Lower leg skin (tissue), 4 donors: ENCODE measurements at regions of chr4 and their contacts with region 1.

Region 1: DNA sequence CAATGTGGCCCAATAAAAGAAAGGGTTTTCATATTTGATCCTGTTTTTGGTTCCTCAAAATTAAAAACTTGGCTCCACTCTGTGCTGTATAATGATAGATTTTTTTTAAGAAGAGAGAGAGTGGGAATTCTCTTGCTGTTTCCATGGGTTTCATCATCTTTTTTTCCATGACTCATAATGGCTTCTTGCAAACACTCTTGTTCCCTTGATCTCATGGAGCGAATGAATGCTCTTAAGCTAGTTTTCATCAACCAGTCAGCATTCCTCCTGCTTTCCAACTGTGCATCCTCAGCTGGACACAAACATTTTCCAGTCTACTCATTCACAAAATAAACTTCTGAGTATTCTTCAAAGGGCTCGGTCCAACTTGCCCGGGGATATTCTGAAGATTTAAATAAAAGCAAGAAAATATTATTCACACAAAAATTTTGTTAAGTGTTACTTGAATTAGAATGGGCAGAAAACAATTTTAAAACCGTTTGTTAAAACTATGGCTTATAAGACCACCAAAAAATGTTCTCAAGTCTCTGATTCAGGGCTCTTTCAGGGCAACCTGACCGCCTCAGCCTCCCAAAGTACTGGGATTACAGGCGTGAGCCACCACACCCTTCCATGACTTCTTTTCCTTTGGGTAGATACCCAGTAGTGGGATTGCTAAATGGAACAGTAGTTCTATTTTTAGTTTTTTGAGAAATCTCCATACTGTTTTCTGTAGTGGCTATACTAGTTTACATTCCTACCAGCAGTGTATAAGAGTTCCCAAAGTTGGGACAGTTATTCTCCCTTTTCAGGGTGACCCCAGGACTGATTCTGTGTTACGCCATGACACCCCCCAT is 64.7 kb downstream of the TMEM156 start:
- DNase-seq: no peak
- H3K4me3 ChIP-seq: no peak overlapping the region
- CTCF ChIP-seq: no peak
- POLR2A ChIP-seq: no peak

Region 2: DNA sequence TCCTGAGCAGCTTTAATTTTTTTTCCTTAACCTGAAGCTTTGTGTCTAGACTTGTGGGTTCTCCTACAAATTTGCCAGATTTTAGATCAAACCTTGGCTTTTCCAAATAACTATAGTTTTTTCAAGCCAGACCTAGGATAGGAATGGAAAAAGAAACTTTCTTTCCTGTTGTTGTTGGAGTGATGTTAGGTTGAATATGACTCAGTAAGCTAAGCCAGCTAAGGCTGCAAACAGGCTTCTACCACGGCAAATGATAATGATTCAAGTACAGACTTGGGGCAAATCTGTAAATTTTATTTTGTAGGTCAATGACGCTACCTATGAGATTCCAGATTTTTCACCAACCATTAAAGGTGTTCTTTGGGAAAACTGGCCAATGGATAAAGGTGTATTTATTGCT is 260.4 kb after region 1 on chr4:
- intact Hi-C with region 1: no loop called
- DNase-seq: no peak
- H3K4me3 ChIP-seq: no peak overlapping the region
- CTCF ChIP-seq: no peak
- POLR2A ChIP-seq: no peak

Region 3: DNA sequence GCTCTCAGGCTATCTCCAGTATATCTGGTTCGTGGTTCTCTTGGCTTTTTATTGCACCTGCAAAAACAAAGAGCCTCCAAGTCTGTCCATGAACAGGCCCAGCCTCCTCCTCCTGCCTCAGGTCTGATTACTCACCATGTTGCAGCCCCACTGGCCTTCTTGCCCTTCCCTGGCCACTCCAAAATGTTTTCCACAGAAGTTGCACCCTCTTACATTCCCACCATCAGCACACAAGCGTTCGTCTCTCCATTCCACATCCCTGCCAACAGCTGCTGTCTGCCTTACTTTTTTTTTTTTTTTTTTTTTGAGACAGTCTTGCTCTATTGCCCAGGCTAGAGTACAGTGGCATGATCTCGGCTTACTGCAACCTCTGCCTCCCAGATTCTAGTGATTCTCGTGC is 311.9 kb after region 1 on chr4:
- intact Hi-C with region 1: loop called (anchors 5 kb)
- DNase-seq: no peak
- H3K4me3 ChIP-seq: no peak overlapping the region
- CTCF ChIP-seq: no peak
- POLR2A ChIP-seq: no peak